ENCODE measurements at regions of chr16 and their contacts with region 1.

Region 1: GRCh38 chr16:86508947-86509758 is 1.2 kb upstream of the FOXF1 start:
- DNase-seq: peak; percentile 89
- ATAC-seq: peak; percentile 7
- H3K4me3 ChIP-seq: peak overlapping the region; percentile 98
- H3K27ac ChIP-seq: peak overlapping the region; percentile 100
- H3K4me1 ChIP-seq: peaks cover 6% of the 10 kb centered on the region
- H3K27me3 ChIP-seq: no peaks in the 10 kb centered on the region
- CTCF ChIP-seq: no peak
- POLR2A ChIP-seq: peak; percentile 92
- RAD21 ChIP-seq: no peak; the same call in 1 of the 2 replicates

Region 2: GRCh38 chr16:86158688-86159360 is 350.3 kb before region 1 on chr16:
- CTCF ChIA-PET with region 1: no interaction called
- POLR2A ChIA-PET with region 1: interaction called, 4 read pairs
- dilution Hi-C with region 1: no loop called
- in situ Hi-C with region 1: no loop called
- intact Hi-C with region 1: loop called (anchors 10 kb)
- DNase-seq: peak; percentile 36
- ATAC-seq: no peak
- H3K4me3 ChIP-seq: no peak overlapping the region
- H3K27ac ChIP-seq: no peak overlapping the region
- H3K4me1 ChIP-seq: peaks cover 13% of the 10 kb centered on the region
- H3K27me3 ChIP-seq: no peaks in the 10 kb centered on the region
- CTCF ChIP-seq: peak; percentile 41
- POLR2A ChIP-seq: no peak
- RAD21 ChIP-seq: peak; percentile 36

Region 3: GRCh38 chr16:86207350-86207749 is 301.8 kb before region 1 on chr16:
- CTCF ChIA-PET with region 1: no interaction called
- POLR2A ChIA-PET with region 1: no interaction called
- dilution Hi-C with region 1: no loop called
- in situ Hi-C with region 1: no loop called
- intact Hi-C with region 1: no loop called
- DNase-seq: no peak
- ATAC-seq: no peak
- H3K4me3 ChIP-seq: no peak overlapping the region
- H3K27ac ChIP-seq: no peak overlapping the region
- H3K4me1 ChIP-seq: no peaks in the 10 kb centered on the region
- H3K27me3 ChIP-seq: no peaks in the 10 kb centered on the region
- CTCF ChIP-seq: no peak
- POLR2A ChIP-seq: no peak
- RAD21 ChIP-seq: no peak

Region 4: GRCh38 chr16:86300746-86301481 is 208.2 kb before region 1 on chr16:
- CTCF ChIA-PET with region 1: interaction called, 8 read pairs
- POLR2A ChIA-PET with region 1: interaction called, 5 read pairs
- dilution Hi-C with region 1: no loop called
- in situ Hi-C with region 1: loop called (anchors 5 kb)
- intact Hi-C with region 1: loop called (anchors 2 kb)
- DNase-seq: peak; percentile 85
- ATAC-seq: peak; percentile 16
- H3K4me3 ChIP-seq: peak overlapping the region; percentile 21
- H3K27ac ChIP-seq: peak overlapping the region; percentile 97
- H3K4me1 ChIP-seq: peaks cover 65% of the 10 kb centered on the region
- H3K27me3 ChIP-seq: no peaks in the 10 kb centered on the region
- CTCF ChIP-seq: no peak
- POLR2A ChIP-seq: peak; percentile 49; the same call in 1 of the 2 replicates
- RAD21 ChIP-seq: no peak

Region 5: DNA sequence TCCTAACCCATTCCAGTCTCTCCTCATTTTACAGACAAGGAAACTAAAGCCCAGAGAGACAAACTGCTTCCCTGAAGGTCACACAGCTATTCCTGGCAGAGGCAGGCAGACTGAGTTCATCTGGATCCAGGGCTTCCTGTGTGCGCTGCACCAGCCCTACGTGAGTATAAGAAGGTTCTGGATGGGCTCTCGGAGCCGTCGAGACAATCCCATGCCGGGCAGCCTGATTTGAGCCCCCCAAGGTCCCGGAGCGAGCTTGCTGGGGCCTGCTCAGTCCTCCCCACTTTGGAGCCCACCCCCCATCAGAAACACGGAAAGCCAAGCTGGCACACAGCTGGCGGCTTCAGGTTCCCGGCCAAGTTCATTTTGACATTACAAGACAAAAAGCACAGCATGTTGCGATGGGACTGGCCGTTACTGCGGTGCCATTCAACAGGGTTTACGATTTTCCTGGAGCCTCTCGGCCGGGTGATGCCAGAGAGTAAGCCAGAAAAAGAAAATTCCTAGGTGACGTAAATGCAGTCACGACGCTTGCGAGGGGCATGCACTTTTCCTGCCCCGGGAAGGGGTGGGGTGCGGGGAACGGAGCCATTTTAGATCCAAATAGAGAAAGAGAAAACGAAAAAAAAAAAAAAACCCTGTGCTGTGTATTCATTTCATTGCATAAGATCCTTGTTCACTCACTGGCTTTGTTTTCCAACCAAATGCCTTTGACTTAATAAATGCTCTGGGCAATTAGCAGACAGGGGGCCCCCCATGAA is 165.9 kb before region 1 on chr16:
- CTCF ChIA-PET with region 1: no interaction called
- POLR2A ChIA-PET with region 1: no interaction called
- dilution Hi-C with region 1: no loop called
- in situ Hi-C with region 1: no loop called
- intact Hi-C with region 1: loop called (anchors 2 kb)
- DNase-seq: peak; percentile 89
- ATAC-seq: peak; percentile 92
- H3K4me3 ChIP-seq: no peak overlapping the region
- H3K27ac ChIP-seq: peak overlapping the region; percentile 96
- H3K4me1 ChIP-seq: peaks cover 21% of the 10 kb centered on the region
- H3K27me3 ChIP-seq: no peaks in the 10 kb centered on the region
- CTCF ChIP-seq: no peak
- POLR2A ChIP-seq: peak; percentile 39; the same call in 1 of the 2 replicates
- RAD21 ChIP-seq: no peak

Region 6: DNA sequence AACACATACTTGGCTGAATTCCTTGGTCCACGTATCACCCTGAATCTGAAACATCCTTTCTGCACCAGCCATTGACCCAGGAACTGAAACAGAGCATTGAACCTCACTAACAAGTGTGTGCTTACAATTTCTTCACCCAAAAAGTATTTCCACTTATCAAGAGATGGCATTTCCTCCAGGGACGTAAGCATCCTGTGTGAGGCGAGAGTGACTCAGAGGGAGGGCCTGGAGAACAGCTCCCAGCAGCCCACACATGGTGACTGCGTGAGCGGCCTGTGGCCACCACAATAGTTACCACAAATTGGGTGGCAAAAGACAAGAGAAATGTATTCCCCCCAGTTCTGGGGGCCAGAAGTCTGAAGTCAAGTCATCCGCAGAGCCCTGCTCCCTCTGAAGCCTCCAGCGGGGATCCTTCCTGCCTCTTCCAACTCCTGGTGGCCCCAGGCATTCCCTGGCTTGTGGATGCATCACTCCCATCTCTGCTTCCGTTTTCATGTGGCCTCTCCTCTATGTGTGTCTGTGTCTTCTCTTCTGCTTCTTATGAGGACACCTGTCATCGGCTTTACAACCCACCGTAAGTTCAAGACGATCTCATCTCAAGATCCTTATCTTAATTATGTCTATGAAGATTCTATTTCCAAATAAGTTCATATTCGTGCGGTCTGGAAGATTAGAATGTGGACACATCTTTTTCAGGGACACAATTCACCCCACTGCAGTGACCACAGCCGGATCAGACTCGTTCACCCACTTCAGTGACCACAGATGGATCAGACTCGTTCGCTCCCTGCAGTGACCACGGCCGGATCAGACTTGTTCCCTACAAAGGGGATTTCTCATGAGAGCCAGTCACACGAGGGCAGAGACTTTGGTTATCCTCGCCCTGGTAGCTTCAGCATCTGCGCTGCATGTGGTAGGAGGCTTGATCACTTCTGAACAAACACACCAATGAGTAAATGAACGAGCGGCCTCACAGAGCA is 121.4 kb before region 1 on chr16:
- CTCF ChIA-PET with region 1: no interaction called
- POLR2A ChIA-PET with region 1: interaction called, 10 read pairs
- dilution Hi-C with region 1: no loop called
- in situ Hi-C with region 1: no loop called
- intact Hi-C with region 1: no loop called
- DNase-seq: peak; percentile 100
- ATAC-seq: peak; percentile 68
- H3K4me3 ChIP-seq: no peak overlapping the region
- H3K27ac ChIP-seq: peak overlapping the region; percentile 85
- H3K4me1 ChIP-seq: peaks cover 37% of the 10 kb centered on the region
- H3K27me3 ChIP-seq: no peaks in the 10 kb centered on the region
- CTCF ChIP-seq: no peak
- POLR2A ChIP-seq: no peak
- RAD21 ChIP-seq: peak; percentile 38

Region 7: DNA sequence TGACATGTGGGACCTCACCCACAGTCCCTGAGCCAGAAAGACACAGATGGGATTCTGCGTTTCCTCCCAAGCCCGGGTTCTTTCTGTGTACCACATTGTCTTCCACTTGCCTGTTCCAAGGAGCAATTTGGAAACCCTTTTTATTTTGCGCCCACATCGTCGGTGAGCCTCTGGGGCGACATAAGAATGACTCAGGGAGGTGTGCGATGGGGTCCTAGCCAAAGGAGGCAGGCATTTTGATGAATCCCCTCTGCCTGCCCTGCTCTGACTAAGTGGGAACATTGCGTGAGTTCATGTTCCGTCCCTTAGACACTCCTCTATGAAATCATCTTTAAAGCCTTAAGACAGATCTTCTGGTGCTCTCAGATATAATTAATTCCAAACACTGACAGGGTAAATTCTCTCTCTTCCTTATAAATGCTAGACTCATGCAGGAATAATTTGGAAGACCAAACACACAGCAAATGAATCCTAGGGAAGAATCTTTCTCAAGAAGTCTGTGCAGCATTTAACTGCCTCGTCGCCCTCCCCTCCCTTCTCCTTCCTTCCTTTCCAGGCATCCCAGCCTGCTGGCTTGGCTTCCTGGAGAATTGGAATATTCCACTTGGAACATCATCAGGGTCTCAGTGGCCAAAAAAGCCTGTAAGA is 51.5 kb before region 1 on chr16:
- CTCF ChIA-PET with region 1: no interaction called
- POLR2A ChIA-PET with region 1: interaction called, 5 read pairs
- dilution Hi-C with region 1: no loop called
- in situ Hi-C with region 1: no loop called
- intact Hi-C with region 1: loop called (anchors 1 kb)
- DNase-seq: peak; percentile 99
- ATAC-seq: peak; percentile 61
- H3K4me3 ChIP-seq: no peak overlapping the region
- H3K27ac ChIP-seq: peak overlapping the region; percentile 97
- H3K4me1 ChIP-seq: peaks cover 28% of the 10 kb centered on the region
- H3K27me3 ChIP-seq: no peaks in the 10 kb centered on the region
- CTCF ChIP-seq: no peak
- POLR2A ChIP-seq: peak; percentile 72
- RAD21 ChIP-seq: no peak; the same call in 1 of the 2 replicates